B cell (primary cell): ENCODE measurements at regions of chr7 and their contacts with region 1.

Region 1: GRCh38 chr7:121366852-121367431 is 29.2 kb downstream of the FAM3C start:
- DNase-seq: peak; percentile 74
- ATAC-seq: no peak
- H3K4me3 ChIP-seq: no peak overlapping the region
- H3K4me3 Mint-ChIP-seq: peak overlapping the region; percentile 6
- H3K27ac ChIP-seq: peak overlapping the region in 1 of 2 donors; percentile 76
- H3K27ac Mint-ChIP-seq: peak overlapping the region; percentile 44
- H3K4me1 ChIP-seq: peaks cover 42 to 46% of the 10 kb centered on the region in 2 donors
- H3K4me1 Mint-ChIP-seq: peaks cover 55% of the 10 kb centered on the region
- H3K27me3 ChIP-seq: no peaks in the 10 kb centered on the region
- H3K27me3 Mint-ChIP-seq: no peaks in the 10 kb centered on the region
- CTCF ChIP-seq: peak; percentile 92

Region 2: GRCh38 chr7:121126801-121127534 is 240.0 kb before region 1 on chr7:
- CTCF ChIA-PET with region 1: interaction called, 9 read pairs
- POLR2A ChIA-PET with region 1: no interaction called
- intact Hi-C with region 1: loop called (anchors 10 kb)
- DNase-seq: peak; percentile 51
- ATAC-seq: no peak
- H3K4me3 ChIP-seq: no peak overlapping the region
- H3K4me3 Mint-ChIP-seq: no peak overlapping the region
- H3K27ac ChIP-seq: no peak overlapping the region
- H3K27ac Mint-ChIP-seq: no peak overlapping the region
- H3K4me1 ChIP-seq: peaks cover 0 to 15% of the 10 kb centered on the region in 2 donors
- H3K4me1 Mint-ChIP-seq: peaks cover 9% of the 10 kb centered on the region
- H3K27me3 ChIP-seq: no peaks in the 10 kb centered on the region
- H3K27me3 Mint-ChIP-seq: no peaks in the 10 kb centered on the region
- CTCF ChIP-seq: peak; percentile 74

Region 3: DNA sequence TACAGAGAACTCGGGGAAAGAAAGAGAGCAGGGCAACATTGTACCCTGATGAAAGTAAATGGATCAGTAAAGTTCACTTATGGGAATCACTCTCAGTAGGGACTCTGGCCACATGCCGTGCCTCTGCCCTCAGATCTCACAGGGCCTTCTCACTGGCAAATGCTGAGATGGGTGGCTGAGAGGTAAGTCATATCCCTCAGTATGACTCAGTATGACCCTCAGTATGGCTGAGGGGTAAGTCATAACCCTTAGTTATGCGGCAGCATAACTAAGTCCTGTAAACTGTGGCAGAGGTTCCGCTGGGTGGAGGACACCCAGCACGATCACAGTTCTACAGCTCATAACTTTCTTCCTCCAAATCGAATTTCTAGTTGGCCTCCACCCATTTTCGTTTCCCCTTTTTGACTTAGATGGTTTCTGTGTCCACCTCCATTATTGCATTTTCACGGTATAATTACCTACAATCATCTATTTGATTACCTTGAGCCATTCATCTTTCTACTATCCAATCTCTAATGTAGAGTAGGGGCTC is 64.7 kb before region 1 on chr7:
- CTCF ChIA-PET with region 1: no interaction called
- POLR2A ChIA-PET with region 1: no interaction called
- intact Hi-C with region 1: no loop called
- DNase-seq: peak; percentile 68
- ATAC-seq: peak; percentile 88
- H3K4me3 ChIP-seq: peak overlapping the region in 1 of 5 experiments; percentile 19
- H3K4me3 Mint-ChIP-seq: peak overlapping the region; percentile 50
- H3K27ac ChIP-seq: peak overlapping the region; percentile 68 to 74
- H3K27ac Mint-ChIP-seq: peak overlapping the region; percentile 87
- H3K4me1 ChIP-seq: peaks cover 24 to 26% of the 10 kb centered on the region in 2 donors
- H3K4me1 Mint-ChIP-seq: peaks cover 50% of the 10 kb centered on the region
- H3K27me3 ChIP-seq: no peaks in the 10 kb centered on the region
- H3K27me3 Mint-ChIP-seq: no peaks in the 10 kb centered on the region
- CTCF ChIP-seq: no peak

Region 4: DNA sequence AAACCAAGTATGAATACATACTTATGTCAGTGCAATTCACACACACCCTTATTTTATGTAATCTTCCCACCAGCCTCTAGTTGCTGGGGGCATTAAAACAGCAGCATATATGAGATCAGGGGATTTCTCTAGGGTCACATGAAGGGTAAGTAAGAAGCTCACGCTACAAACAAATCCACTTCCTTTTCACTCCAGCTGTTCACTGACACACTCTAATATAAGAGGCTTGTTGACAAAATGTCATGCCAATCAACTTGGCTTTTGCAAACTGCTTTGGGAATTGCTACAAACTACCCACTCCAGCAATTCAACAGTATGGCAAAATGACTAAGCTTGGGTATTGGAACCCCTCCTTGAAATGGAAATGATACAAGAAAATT is 18.8 kb after region 1 on chr7:
- CTCF ChIA-PET with region 1: interaction called, 43 read pairs
- POLR2A ChIA-PET with region 1: interaction called, 6 read pairs
- intact Hi-C with region 1: loop called (anchors 1 kb)
- DNase-seq: peak; percentile 89
- ATAC-seq: peak; percentile 89
- H3K4me3 ChIP-seq: peak overlapping the region in 1 of 5 experiments; percentile 37
- H3K4me3 Mint-ChIP-seq: peak overlapping the region; percentile 79
- H3K27ac ChIP-seq: peak overlapping the region; percentile 96 to 99
- H3K27ac Mint-ChIP-seq: peak overlapping the region; percentile 96
- H3K4me1 ChIP-seq: peaks cover 89 to 96% of the 10 kb centered on the region in 2 donors
- H3K4me1 Mint-ChIP-seq: peaks cover 92% of the 10 kb centered on the region
- H3K27me3 ChIP-seq: no peaks in the 10 kb centered on the region
- H3K27me3 Mint-ChIP-seq: no peaks in the 10 kb centered on the region
- CTCF ChIP-seq: no peak

Region 5: DNA sequence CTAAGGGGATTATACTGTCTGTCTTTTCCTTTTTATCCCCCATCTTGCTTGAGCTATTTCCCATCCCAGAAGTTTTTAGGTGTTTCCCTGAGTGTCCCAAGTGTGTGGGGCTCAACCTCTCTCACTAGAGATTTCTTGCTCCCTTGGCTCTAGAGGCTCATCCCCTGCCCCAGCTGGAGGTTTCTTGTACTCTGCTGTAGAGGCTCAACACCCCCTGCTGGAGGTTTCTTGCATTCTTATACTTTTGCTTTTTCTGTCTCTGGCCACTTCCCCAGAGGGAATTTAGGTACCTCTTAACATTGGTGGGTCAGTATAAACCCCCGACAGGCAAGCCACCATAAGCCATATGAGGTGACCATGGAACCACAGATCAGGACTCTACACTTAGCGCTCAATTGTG is 143.4 kb after region 1 on chr7:
- CTCF ChIA-PET with region 1: interaction called, 12 read pairs
- POLR2A ChIA-PET with region 1: interaction called, 9 read pairs
- intact Hi-C with region 1: no loop called
- DNase-seq: peak; percentile 38
- ATAC-seq: no peak
- H3K4me3 ChIP-seq: no peak overlapping the region
- H3K4me3 Mint-ChIP-seq: no peak overlapping the region
- H3K27ac ChIP-seq: no peak overlapping the region
- H3K27ac Mint-ChIP-seq: no peak overlapping the region
- H3K4me1 ChIP-seq: no peaks in the 10 kb centered on the region
- H3K4me1 Mint-ChIP-seq: no peaks in the 10 kb centered on the region
- H3K27me3 ChIP-seq: no peaks in the 10 kb centered on the region
- H3K27me3 Mint-ChIP-seq: peaks cover 9% of the 10 kb centered on the region
- CTCF ChIP-seq: no peak

Region 6: GRCh38 chr7:121994625-121995410 is 627.9 kb after region 1 on chr7:
- CTCF ChIA-PET with region 1: interaction called, 13 read pairs
- POLR2A ChIA-PET with region 1: no interaction called
- intact Hi-C with region 1: no loop called
- DNase-seq: peak; percentile 53
- ATAC-seq: peak; percentile 74
- H3K4me3 ChIP-seq: no peak overlapping the region
- H3K4me3 Mint-ChIP-seq: no peak overlapping the region
- H3K27ac ChIP-seq: no peak overlapping the region
- H3K27ac Mint-ChIP-seq: no peak overlapping the region
- H3K4me1 ChIP-seq: no peaks in the 10 kb centered on the region
- H3K4me1 Mint-ChIP-seq: no peaks in the 10 kb centered on the region
- H3K27me3 ChIP-seq: no peaks in the 10 kb centered on the region
- H3K27me3 Mint-ChIP-seq: peaks cover 3% of the 10 kb centered on the region
- CTCF ChIP-seq: peak; percentile 91